Endothelial cell of umbilical vein (primary cell): ENCODE measurements at regions of chr14 and their contacts with region 1.

Region 1: GRCh38 chr14:104677512-104678332 is 11.7 kb upstream of the INF2 start:
- DNase-seq: peak; percentile 92
- H3K4me3 ChIP-seq: peak overlapping the region in 2 of 3 experiments; percentile 19 to 38
- H3K27ac ChIP-seq: peak overlapping the region; percentile 95
- H3K4me1 ChIP-seq: peaks cover 40% of the 10 kb centered on the region
- H3K27me3 ChIP-seq: no peaks in the 10 kb centered on the region
- CTCF ChIP-seq: no peak
- POLR2A ChIP-seq: peak; percentile 71

Region 2: GRCh38 chr14:104689109-104689880 is 11.6 kb after region 1 on chr14 and contains the start of gene INF2:
- CTCF ChIA-PET with region 1: interaction called, 11 read pairs
- POLR2A ChIA-PET with region 1: no interaction called
- dilution Hi-C with region 1: no loop called
- intact Hi-C with region 1: loop called (anchors 1 kb)
- DNase-seq: peak; percentile 35
- H3K4me3 ChIP-seq: peak within 1 kb of the TSS; percentile 69 to 92 (median 87)
- H3K27ac ChIP-seq: peak within 1 kb of the TSS; percentile 50
- H3K4me1 ChIP-seq: peaks cover 28% of the 10 kb centered on the region
- H3K27me3 ChIP-seq: no peaks in the 10 kb centered on the region
- CTCF ChIP-seq: no peak
- POLR2A ChIP-seq: peak; percentile 76
- total RNA-seq, gene INF2: 117 and 124 TPM in 2 replicates